ENCODE measurements at regions of chr1 and their contacts with region 1.

Region 1: GRCh38 chr1:74468982-74469603 is 43.3 kb downstream of the LRRC53 start:
- DNase-seq: peak; percentile 62
- H3K4me3 ChIP-seq: no peak overlapping the region
- H3K27ac ChIP-seq: no peak overlapping the region
- H3K4me1 ChIP-seq: no peaks in the 10 kb centered on the region
- H3K27me3 ChIP-seq: peaks cover 21% of the 10 kb centered on the region
- CTCF ChIP-seq: peak; percentile 70

Region 2: DNA sequence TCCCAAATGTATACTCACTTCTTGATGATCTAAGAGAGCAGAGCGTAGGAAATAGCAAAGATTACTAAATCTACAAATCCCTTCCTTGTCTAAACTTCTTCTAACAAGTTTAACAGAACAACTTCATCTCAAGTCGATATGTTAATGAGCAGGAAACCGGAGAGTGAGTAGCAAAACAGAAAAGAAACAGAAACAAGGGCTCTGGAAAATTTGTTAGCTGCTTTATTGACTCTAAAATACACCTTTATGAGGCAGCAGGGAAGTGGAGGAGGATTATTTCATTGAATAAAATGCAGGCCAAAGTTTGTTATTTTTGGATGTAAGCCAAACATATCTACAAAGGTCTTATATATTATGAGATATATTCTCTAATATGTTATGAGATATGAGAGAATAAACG is 463.6 kb before region 1 on chr1:
- CTCF ChIA-PET with region 1: no interaction called
- POLR2A ChIA-PET with region 1: no interaction called
- intact Hi-C with region 1: loop called (anchors 5 kb)
- DNase-seq: no peak
- H3K4me3 ChIP-seq: no peak overlapping the region
- H3K27ac ChIP-seq: no peak overlapping the region
- H3K4me1 ChIP-seq: no peaks in the 10 kb centered on the region
- H3K27me3 ChIP-seq: no peaks in the 10 kb centered on the region
- CTCF ChIP-seq: no peak

Region 3: GRCh38 chr1:74343216-74343615 is 125.9 kb before region 1 on chr1:
- CTCF ChIA-PET with region 1: no interaction called
- POLR2A ChIA-PET with region 1: no interaction called
- intact Hi-C with region 1: no loop called
- DNase-seq: peak; percentile 69
- H3K4me3 ChIP-seq: no peak overlapping the region
- H3K27ac ChIP-seq: no peak overlapping the region
- H3K4me1 ChIP-seq: no peaks in the 10 kb centered on the region
- H3K27me3 ChIP-seq: no peaks in the 10 kb centered on the region
- CTCF ChIP-seq: no peak